ENCODE measurements at regions of chr4 and their contacts with region 1.

Region 1: DNA sequence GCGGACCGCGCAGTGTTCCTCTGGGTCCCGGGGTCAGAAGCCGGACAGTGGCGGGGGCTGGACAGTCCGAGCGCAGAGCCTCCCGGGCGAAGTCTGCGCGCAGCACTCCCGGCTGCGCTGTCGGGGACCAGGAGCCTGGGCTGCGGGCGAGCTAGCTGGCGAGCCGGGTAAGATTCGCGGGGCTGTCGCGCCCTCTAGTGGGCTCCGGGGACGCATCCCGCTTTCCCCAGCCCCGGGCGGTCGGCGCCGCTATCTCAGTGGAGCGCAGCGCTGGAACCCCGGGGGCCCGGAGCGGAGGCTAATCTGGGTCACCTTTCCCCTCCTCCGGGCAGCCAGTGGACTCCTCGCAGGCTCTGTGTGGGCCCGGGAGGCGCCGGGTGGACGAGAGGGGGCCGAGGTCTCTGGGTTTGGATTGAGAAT is 4.2 kb downstream of the PDGFRA start:
- DNase-seq: peak; percentile 81 to 91
- H3K4me3 ChIP-seq: peak overlapping the region; percentile 55
- H3K4me1 ChIP-seq: peaks cover 3% of the 10 kb centered on the region
- H3K27me3 ChIP-seq: peaks cover 32% of the 10 kb centered on the region

Region 2: GRCh38 chr4:52234561-52235440 is 1998.5 kb before region 1 on chr4:
- in situ Hi-C with region 1: loop called (anchors 25 kb)
- DNase-seq: peak; percentile 22 to 81
- H3K4me3 ChIP-seq: no peak overlapping the region
- H3K4me1 ChIP-seq: peaks cover 6% of the 10 kb centered on the region
- H3K27me3 ChIP-seq: no peaks in the 10 kb centered on the region; the same call in 1 of the 2 replicates

Region 3: GRCh38 chr4:53015681-53016080 is 1217.6 kb before region 1 on chr4:
- in situ Hi-C with region 1: loop called (anchors 10 kb)
- DNase-seq: peak; percentile 64 to 68
- H3K4me3 ChIP-seq: no peak overlapping the region
- H3K4me1 ChIP-seq: 0 out of 2 replicates have a peak, but pooled peaks cover 4% of the 10 kb centered on the region
- H3K27me3 ChIP-seq: no peaks in the 10 kb centered on the region

Region 4: DNA sequence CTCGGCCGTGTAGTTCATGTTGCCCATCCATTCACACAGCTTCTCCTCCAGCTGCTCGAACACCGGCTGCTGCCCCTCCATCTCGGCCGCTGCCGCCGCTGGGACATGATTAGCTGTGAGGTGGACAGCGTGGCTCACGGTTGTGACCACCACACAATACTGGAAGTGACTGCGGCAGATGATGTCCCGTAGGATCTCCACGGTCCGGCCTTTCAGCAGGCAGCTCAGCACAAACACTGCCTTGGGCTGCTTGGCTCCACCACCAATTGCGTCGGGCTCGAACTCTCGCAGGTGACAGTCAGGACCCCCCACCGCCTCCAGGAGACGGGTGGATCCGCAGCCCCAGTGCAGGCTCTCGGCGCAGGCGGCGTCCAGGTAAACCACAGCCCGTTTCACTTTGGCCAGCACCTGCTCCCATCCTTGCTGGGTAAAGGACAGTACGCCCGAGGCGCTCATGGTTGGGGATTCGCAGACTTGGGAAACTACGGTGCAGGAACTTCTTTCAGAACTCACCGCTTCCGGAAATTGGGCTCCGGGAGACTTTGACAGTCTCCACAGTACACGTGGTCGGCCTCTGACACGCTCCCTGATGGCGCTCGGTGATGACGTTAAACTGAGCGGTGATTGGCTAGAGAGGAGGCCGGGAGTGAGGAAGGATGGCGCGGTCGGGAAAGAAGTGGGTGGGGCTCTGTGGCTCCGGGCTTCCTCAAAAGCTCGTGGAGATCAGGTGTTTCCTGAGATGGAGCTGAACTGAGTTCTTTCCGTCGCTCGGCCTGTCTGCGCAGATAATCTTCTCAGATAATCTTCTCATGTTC is 867.6 kb before region 1 on chr4 and contains the start of gene SCFD2:
- in situ Hi-C with region 1: loop called (anchors 25 kb)
- DNase-seq: peak; percentile 95 to 97
- H3K4me3 ChIP-seq: peak within 1 kb of the TSS; percentile 69
- H3K4me1 ChIP-seq: peaks cover 8% of the 10 kb centered on the region
- H3K27me3 ChIP-seq: peaks cover 13% of the 10 kb centered on the region

Region 5: DNA sequence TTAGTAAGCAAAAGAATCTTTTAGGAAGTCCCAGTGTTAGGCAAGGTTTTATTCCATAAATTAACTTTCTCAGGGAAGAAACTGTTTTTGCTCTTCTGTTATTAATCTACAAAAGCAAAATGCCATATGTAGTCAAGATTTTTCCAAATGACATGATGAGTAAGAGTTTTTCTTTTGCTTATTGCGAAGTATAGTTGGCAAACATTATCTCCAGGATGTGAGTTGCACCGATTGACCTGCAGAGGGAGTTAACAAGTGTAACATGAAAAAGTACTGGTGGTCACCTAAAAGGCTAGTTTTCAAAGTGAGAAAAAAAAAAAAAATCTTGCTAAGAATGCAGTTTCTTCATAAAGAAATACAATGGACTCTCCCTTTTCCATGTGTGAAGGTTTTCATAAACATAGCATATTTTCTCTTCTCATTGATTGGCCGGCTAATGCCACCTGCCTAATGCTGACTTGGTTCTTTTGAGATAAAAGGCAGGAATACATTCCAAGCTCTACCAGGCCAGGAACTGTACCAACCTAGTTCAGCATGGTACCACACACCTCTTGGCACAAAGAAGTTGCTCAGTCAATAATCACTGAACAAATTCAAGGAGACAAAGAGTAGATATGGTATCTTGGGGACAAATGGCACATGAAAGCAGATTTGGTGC is 742.2 kb before region 1 on chr4:
- in situ Hi-C with region 1: loop called (anchors 25 kb)
- DNase-seq: peak; percentile 39 to 49
- H3K4me3 ChIP-seq: no peak overlapping the region
- H3K4me1 ChIP-seq: no peaks in the 10 kb centered on the region; the same call in 1 of the 2 replicates
- H3K27me3 ChIP-seq: 0 out of 2 replicates have a peak, but pooled peaks cover 2% of the 10 kb centered on the region

Region 6: DNA sequence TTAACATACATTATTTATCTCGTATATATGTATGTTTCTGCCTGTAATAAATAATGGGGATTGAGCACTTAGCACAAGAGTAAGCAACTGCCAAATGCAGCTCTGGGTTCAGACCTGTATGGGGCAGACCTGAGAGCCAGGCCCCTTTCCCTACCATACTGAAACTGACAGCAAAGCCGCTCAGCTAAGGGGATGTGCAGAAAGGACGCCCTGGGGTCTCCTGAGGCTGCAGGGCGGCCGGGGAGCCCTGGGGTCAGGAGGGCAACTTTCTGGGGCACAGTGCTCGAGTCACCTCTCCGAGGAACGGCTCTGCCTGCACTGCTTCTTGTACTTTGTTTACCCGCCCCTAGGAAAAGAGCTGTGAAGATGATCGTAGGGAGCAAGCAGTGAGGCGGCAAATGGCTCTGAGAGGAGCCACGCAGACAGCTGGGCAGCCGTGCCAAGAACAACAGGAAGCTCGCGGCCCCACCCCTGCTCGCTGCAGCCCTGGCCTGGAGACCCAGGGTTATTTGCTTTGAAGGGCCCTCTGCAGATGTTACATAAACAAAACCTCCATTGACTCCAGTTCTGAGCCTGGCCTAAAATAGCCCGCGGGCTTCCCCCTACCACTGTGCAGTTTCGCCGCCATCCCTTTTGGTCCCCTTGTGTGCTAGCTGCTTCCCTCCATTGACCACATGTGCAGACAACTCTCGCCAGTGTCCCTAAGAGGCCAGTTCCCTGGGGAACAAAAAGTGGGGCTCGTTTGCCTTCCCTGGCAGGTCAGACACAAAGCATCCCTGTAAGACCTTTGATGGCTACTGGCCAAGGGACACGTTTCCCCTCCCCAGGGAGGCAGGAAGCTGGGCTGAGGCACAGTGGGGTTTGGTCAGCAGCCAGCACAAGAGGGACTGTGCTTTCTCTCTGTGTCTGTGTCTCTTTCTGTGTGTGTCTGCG is 530.7 kb before region 1 on chr4:
- in situ Hi-C with region 1: loop called (anchors 25 kb)
- DNase-seq: peak in 1 of 2 experiments; percentile 48
- H3K4me3 ChIP-seq: no peak overlapping the region
- H3K4me1 ChIP-seq: peaks cover 8% of the 10 kb centered on the region
- H3K27me3 ChIP-seq: peaks cover 3% of the 10 kb centered on the region; the same call in 1 of the 2 replicates

Region 7: DNA sequence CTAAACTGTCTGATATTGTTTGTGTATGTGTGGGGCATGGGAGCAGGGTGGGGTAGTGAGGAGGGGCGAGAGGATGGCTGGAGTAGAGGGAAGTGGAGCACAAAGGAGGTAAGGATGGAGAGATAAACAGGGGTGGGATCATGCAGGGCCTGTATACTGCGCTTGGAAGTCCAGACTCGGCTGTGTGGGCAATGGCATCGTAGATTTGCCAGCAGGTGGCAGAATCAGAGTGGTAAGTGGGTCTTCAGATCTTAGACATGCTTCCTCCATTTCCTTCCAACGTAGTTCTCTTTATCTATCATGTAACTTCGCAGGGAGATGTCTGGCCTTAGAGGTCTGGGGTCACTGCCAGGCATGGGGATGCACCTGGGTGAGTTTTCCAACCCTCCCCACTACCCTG is 151.3 kb after region 1 on chr4:
- in situ Hi-C with region 1: no loop called
- DNase-seq: peak in 1 of 2 experiments; percentile 11
- H3K4me3 ChIP-seq: no peak overlapping the region
- H3K4me1 ChIP-seq: no peaks in the 10 kb centered on the region
- H3K27me3 ChIP-seq: peaks cover 10% of the 10 kb centered on the region; the same call in 1 of the 2 replicates